ENCODE measurements at regions of chr5 and their contacts with region 1.

Region 1: DNA sequence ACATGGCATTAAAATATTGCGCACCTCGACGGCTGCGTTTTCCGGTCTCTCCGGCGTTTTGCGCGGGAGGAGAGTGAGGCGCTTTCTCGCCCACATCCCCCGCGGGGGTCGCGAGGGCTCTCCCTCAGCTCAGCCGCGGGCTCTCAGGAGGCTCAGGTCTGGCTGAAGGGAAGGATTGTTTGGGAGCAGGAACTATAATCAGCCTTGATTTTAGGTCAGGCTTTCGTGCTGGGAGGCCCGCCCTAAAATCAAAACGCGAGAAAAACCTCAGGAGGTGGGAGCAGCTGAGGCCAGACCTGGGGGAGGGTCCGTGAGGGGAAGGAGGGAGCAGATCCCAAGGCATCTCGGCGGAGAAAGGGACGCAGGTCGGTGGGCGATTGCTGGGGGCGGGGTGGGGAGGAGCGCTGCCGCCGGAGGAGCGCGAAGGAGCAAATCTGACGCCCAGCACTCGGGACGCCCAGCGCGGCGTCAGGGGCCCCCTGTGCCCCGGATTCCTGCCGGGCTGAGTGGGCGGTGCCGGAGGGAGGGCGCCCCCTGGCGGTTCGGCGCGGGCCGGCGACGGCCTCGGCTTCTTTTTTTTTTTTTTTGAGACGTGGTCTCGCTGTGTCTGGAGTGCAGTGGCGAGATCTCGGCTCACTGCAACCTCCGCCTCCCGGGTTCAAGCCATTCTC is 18.7 kb upstream of the RNF130 start:
- DNase-seq: peak; percentile 20
- H3K4me3 ChIP-seq: peak overlapping the region; percentile 65
- H3K27ac ChIP-seq: peak overlapping the region; percentile 65
- H3K27me3 ChIP-seq: no peaks in the 10 kb centered on the region
- CTCF ChIP-seq: peak; percentile 79

Region 2: GRCh38 chr5:180072556-180072955 is 17.7 kb before region 1 on chr5:
- CTCF ChIA-PET with region 1: interaction called, 27 read pairs
- POLR2A ChIA-PET with region 1: no interaction called
- DNase-seq: no peak
- H3K4me3 ChIP-seq: no peak overlapping the region
- H3K27ac ChIP-seq: peak overlapping the region; percentile 31
- H3K27me3 ChIP-seq: peaks cover 3% of the 10 kb centered on the region
- CTCF ChIP-seq: no peak

Region 3: GRCh38 chr5:180253036-180253824 is 163.0 kb after region 1 on chr5:
- CTCF ChIA-PET with region 1: no interaction called
- POLR2A ChIA-PET with region 1: no interaction called
- DNase-seq: no peak
- H3K4me3 ChIP-seq: no peak overlapping the region
- H3K27ac ChIP-seq: no peak overlapping the region
- H3K27me3 ChIP-seq: no peaks in the 10 kb centered on the region
- CTCF ChIP-seq: no peak

Region 4: DNA sequence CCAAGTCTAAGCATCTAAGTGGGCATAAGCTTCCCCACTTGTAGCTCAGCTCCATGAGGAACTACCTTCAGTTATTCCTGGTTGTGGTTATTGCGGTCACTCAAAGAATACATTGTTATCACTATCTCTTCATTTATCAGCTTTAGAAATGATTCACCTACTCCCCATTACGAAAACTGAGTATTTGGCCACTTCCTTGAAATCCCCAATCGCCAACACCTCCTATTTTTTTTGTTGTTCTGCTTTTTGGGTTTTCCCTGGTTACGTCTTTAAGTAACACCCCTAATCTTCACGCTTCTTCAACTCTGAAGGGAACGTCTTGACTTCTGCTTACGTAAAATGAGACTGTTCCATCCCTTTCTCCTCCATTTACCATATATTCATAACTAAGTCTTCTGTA is 181.0 kb after region 1 on chr5:
- CTCF ChIA-PET with region 1: interaction called, 11 read pairs
- POLR2A ChIA-PET with region 1: no interaction called
- DNase-seq: no peak
- H3K4me3 ChIP-seq: no peak overlapping the region
- H3K27ac ChIP-seq: no peak overlapping the region
- H3K27me3 ChIP-seq: no peaks in the 10 kb centered on the region
- CTCF ChIP-seq: no peak

Region 5: DNA sequence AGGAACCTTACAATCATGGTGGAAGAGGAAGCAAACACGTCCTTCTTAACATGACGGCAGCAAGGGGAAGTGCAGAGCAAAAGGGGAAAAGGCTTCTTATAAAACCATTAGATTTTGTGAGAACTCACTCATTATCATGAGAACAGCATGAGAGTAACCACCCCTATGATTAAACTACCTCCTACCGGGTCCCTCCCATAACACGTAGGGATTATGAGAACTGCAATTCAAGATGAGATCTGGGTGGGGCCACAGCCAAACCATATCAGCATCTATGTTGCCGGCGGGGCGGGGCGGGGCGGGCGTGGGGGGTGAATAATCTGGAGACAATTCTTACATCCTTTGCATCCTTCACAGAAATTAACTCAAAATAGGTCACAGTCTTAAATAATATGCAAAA is 321.7 kb after region 1 on chr5:
- CTCF ChIA-PET with region 1: no interaction called
- POLR2A ChIA-PET with region 1: no interaction called
- DNase-seq: no peak
- H3K4me3 ChIP-seq: no peak overlapping the region
- H3K27ac ChIP-seq: no peak overlapping the region
- H3K27me3 ChIP-seq: no peaks in the 10 kb centered on the region
- CTCF ChIP-seq: no peak

Measured in AG04450 (cell line).